HEK293T (cell line): ENCODE measurements at regions of chr1 and their contacts with region 1.

Region 1: DNA sequence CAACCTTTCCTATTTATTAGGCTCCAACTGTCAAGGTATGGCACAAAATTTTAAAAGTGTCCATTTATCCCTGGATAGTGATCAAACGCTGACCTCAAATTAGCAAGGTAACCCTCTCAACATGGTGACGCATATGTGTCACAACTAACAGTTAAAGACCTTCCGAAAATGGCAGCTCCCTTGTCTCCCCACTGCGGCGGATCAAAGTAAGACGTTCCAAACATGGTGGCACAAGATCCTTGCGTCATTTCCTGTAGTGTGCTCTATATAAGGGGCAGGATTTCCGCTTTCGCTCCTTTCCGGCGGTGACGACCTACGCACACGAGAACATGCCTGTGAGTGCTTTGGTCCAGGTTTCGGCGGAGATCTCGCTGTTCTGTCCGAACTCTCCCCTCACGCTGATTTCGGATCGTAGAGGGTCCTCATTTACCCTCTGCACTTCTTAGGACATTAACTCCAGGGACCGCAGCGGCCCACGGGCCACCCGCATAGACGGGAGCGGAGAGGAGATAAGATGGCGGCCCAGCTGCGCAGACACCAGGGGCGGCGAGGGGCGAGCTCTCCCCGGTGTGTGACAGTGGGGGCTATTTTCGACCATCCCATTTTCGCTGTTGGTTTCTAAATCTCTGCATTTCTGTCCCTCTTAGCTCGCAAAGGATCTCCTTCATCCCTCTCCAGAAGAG is at the start of gene RPS27:
- DNase-seq: peak; percentile 98

Region 2: DNA sequence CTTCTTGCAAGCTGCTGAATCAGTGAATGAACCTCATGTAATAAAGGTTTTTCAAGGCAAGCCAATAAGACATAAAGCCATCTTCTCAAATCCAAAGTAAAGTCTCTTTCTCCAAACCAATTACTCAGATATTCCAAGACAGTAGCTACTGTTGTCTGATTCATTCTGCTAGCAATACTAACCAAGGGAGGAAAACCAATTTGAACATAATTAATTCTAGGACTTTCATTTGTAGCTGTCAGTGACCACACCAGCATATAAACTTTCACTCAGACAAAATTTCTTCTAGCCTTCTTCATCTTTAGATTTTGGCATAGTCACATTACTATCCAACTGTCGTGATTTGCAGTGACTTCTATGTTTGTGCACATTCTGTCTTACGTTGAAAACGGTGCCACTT is 273.3 kb before region 1 on chr1:
- CTCF ChIA-PET with region 1: no interaction called
- POLR2A ChIA-PET with region 1: no interaction called
- DNase-seq: no peak

Region 3: DNA sequence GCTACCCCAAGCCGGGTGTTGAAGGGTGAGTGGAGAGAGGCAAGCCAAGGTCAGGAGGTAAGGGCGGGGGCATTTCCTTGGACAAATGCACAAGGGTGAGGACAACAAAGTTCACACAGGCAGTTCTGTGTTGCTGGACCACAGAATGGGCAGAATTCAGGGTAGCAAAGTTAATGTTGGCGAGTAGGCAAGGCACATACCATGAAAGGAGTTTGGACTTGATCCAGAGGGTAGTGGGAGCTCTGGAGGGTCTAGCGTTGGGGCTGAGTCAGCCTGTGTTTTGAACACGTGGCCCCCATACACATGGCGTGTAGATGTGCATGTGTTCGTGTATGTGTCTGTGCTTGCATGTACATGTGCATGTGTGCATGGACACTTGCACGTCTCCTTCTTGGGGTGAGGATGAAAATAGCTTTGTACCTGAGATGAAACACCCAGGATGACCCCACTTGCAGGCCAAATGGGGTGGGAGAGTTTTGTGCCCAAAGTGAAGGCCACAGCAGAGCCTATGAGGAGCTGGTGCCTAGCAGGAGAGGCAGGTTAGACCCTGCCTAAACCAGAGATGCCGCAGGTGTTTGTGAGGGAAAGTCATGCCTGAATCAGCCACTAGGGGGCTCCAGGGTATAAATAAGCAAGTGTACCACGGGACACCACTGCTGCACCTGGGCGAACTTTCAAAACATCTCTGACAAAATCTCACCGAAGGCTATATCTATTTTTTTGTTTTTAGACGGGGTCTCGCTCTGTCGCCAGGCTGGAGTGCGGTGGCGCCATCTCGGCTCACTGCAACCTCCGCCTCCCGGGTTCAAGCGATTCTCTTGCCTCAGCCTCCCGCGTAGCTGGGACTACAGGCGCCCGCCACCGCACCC is 193.6 kb before region 1 on chr1:
- CTCF ChIA-PET with region 1: interaction called, 16 read pairs
- POLR2A ChIA-PET with region 1: interaction called, 7 read pairs
- DNase-seq: peak; percentile 90

Region 4: DNA sequence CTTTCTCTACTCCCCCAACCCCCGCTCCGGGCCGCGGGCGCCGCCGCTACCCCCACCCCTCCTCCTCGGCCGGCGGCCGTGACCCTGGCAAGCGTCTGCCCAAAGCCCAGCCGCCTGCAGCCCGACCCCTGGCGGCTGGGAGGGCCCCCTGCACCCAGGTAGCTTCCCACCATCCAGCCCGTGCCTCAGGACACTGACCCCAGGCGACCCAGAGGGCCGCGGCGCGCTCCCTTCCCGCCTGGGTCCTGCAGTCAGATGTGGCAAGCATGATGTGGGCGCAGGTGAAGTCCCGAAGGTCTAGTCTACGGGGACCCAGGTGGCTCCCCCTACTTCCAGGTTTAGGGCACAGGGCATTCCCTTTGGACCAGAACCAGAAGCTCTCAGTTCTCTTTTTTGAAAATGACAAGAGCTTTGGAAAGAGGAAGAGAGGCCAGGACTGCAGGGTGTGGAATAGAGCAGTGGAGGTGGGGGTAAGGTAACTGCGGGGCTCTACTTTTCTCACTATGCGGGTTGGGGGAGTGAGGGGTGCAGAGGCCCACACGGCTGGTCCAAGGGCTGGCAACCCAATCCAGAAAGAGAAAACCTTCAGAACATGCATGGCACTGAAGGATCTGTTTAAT is 43.9 kb before region 1 on chr1 and contains the start of gene DENND4B:
- CTCF ChIA-PET with region 1: interaction called, 13 read pairs
- POLR2A ChIA-PET with region 1: interaction called, 14 read pairs
- DNase-seq: peak; percentile 98

Region 5: DNA sequence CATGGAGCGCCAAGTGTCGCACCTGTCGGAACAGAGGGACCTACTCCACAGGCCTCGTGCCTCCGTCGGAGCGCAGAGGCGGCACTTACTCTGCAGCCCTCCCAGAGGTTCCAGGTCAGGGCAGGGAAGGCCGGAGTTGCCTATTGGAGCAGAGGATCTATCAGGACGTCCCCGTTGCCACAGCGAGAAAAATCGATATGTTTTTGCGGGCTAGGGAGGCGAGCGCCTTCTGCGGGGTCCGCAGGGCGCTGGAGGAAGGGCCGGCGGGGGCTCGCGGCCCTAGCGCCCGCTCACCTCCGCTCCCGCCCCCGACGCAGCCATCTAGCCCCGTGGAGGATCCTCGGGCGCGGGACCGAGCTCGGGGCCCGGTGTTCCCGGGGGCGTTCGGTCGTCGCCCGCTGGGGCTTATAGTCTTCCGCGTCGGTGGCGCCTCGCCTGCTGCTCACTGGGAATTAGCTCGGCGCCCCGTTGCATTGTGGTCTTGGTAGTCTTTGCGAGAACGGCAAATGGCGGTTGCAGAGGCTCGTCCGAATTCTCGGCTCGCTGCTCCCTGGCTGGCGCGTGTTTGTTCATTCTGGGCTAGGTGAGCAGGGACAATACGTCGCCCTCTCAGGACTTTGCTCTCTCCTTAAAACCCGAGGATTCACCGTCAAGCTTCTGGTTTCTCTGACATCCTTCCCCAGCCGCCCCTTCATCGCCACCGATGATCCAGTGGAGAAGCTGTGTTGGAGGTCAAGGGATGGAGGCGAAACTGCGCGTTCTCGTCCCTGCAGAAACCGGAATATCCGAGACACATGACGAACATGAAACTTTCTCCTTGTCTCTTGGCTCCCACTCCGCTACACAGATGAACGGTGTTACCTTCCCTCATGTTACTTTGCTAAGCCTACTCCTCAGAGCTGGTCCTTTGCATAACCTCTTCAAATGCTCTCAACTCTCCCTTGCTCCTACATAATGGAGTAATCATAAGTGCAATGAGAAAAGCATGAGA is 13.1 kb before region 1 on chr1 and contains the start of gene JTB:
- CTCF ChIA-PET with region 1: interaction called, 7 read pairs
- POLR2A ChIA-PET with region 1: interaction called, 106 read pairs
- DNase-seq: peak; percentile 89

Region 6: DNA sequence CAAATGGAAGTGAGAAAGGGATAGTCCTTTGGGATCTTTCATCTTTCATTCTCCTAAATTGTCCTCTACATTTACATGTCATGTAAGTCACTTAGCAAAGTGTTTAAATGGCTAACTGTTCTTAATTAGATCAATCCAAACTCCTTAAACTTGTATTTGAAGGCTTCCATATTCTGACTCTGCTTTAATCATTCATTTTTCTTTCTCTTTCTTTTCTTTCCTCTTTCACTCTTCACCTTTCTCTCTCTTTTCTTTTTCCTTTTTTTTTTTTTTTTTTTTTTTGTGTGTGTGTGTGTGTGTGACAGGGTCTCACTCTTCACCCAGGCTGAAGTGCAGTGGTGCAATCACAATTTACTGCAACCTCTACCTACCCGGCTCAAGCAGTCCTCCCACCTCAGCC is 71.7 kb after region 1 on chr1:
- CTCF ChIA-PET with region 1: no interaction called
- POLR2A ChIA-PET with region 1: no interaction called
- DNase-seq: no peak